Panc1 (cell line): ENCODE measurements at regions of chr6 and their contacts with region 1.

Region 1: DNA sequence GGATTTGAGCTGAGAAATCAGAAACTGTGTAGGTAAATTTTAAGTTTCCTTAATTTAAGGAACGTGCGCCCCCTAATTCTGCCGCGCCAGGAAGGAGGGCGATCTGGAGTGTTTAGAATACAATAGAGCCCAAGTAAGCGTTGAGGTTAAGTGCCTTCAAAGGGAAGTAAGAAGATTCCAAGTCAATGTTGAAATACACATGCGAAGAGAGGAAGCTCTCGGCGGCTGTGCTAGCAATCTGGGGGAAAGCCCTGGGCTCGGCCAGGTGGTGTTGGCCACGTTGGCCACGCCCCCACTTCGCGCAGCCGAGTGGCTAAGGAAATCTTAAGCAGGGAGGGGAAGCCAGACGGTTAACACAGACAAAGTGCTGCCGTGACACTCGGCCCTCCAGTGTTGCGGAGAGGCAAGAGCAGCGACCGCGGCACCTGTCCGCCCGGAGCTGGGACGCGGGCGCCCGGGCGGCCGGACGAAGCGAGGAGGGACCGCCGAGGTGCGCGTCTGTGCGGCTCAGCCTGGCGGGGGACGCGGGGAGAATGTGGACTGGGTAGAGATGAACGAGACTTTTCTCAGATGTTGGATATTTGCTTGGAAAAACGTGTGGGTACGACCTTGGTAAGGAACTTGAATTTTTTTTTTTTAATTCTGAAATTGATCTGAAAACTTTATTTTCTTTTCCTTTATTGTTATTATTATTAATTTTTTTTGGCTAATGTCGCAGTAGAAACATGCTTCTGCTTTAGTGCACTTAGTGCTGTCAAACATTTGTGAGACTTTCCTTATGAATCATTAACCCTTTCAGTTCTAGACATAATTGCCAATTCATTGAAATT is at the start of gene PRDM1:
- DNase-seq: no peak
- ATAC-seq: peak; percentile 95
- H3K4me3 ChIP-seq: peak within 1 kb of the TSS; percentile 63 to 68
- H3K27ac ChIP-seq: peak within 1 kb of the TSS; percentile 67
- H3K4me1 ChIP-seq: peaks cover 24% of the 10 kb centered on the region
- H3K27me3 ChIP-seq: peaks cover 2% of the 10 kb centered on the region; the same call in 1 of the 2 replicates
- CTCF ChIP-seq: peak; percentile 58
- total RNA-seq, gene PRDM1: 2.6 TPM

Region 2: GRCh38 chr6:105431226-105431625 is 655.0 kb before region 1 on chr6:
- CTCF ChIA-PET with region 1: no interaction called
- POLR2A ChIA-PET with region 1: no interaction called
- in situ Hi-C with region 1: no loop called
- intact Hi-C with region 1: loop called (anchors 10 kb)
- DNase-seq: no peak
- ATAC-seq: no peak
- H3K4me3 ChIP-seq: no peak overlapping the region
- H3K27ac ChIP-seq: peak overlapping the region; percentile 60
- H3K4me1 ChIP-seq: peaks cover 15% of the 10 kb centered on the region
- H3K27me3 ChIP-seq: no peaks in the 10 kb centered on the region
- CTCF ChIP-seq: peak; percentile 77

Region 3: GRCh38 chr6:105733565-105734162 is 352.5 kb before region 1 on chr6:
- CTCF ChIA-PET with region 1: no interaction called
- POLR2A ChIA-PET with region 1: no interaction called
- in situ Hi-C with region 1: no loop called
- intact Hi-C with region 1: loop called (anchors 10 kb)
- DNase-seq: no peak
- ATAC-seq: no peak
- H3K4me3 ChIP-seq: no peak overlapping the region
- H3K27ac ChIP-seq: no peak overlapping the region; the same call in 1 of the 2 replicates
- H3K4me1 ChIP-seq: no peaks in the 10 kb centered on the region
- H3K27me3 ChIP-seq: no peaks in the 10 kb centered on the region
- CTCF ChIP-seq: peak; percentile 64; the same call in 1 of the 2 replicates

Region 4: DNA sequence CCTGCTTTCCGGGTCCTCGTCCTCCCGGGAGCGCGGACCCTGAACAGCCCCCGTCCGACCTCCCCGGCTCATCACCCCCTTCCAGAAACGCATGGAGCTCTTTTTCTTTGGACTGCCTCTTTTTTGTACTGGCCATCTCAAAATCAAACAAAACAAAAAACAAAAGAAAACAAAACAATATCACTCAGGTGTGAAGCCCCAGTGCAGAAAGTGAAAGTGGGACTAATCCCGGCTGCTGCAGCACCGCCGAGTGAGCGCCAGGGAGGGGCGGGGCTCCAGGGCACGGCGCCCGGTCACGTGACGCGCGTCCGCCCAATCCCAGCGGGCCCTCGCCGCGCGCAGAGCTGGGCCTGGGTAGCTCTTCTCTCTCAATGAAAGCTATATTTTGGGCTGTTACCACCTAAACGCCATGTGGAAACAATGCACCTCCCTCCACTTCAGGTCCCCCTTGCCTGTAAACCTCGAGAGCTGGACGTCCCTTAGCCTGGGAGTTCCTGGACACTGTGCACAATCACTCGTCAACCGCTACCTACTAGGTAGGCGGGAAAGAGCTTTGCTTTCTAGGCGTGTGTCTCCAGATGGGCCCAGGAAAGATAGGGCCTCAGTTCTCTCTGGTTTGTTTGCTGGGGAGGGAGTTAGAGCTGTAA is 93.8 kb before region 1 on chr6:
- CTCF ChIA-PET with region 1: no interaction called
- POLR2A ChIA-PET with region 1: no interaction called
- in situ Hi-C with region 1: no loop called
- intact Hi-C with region 1: loop called (anchors 5 kb)
- DNase-seq: peak; percentile 36
- ATAC-seq: peak; percentile 97
- H3K4me3 ChIP-seq: peak overlapping the region; percentile 87 to 91
- H3K27ac ChIP-seq: peak overlapping the region; percentile 83
- H3K4me1 ChIP-seq: peaks cover 9% of the 10 kb centered on the region; the same call in 1 of the 2 replicates
- H3K27me3 ChIP-seq: no peaks in the 10 kb centered on the region; the same call in 1 of the 2 replicates
- CTCF ChIP-seq: no peak

Region 5: DNA sequence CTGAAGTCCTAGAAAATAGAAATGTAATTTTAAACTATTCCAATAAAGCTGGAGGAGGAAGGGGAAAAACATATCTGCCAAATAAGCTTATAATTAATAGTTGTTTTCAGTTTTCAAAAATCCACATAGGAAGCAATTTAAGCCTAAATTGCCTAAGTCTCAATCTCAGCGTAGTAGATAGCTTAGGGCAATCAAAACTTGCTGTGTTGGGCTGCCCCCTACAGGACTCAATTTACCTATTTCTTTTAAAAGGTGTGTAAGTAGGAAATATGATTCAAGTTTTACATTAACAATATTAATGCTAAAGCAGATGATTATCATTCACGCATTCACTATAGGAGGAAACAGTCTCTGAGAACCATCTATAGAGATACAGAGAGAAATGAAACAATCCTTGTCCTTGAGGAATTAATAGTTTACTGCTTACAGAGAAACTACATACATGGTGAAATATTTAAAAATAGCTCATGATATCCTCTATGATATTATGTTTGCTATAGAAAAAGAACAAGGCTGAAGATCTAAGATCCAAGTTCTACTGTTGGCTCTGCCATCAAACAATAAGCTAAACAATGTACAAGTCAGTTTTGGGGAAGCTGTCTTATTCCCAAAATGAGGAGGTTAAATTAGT is 137.2 kb after region 1 on chr6:
- CTCF ChIA-PET with region 1: interaction called, 3 read pairs
- POLR2A ChIA-PET with region 1: no interaction called
- in situ Hi-C with region 1: no loop called
- intact Hi-C with region 1: loop called (anchors 5 kb)
- DNase-seq: peak; percentile 32
- ATAC-seq: peak; percentile 80
- H3K4me3 ChIP-seq: no peak overlapping the region
- H3K27ac ChIP-seq: no peak overlapping the region
- H3K4me1 ChIP-seq: peaks cover 8% of the 10 kb centered on the region; the same call in 1 of the 2 replicates
- H3K27me3 ChIP-seq: no peaks in the 10 kb centered on the region
- CTCF ChIP-seq: peak; percentile 75; the same call in 1 of the 2 replicates